Body of pancreas (tissue), 4 donors: ENCODE measurements at regions of chr15 and their contacts with region 1.

Region 1: DNA sequence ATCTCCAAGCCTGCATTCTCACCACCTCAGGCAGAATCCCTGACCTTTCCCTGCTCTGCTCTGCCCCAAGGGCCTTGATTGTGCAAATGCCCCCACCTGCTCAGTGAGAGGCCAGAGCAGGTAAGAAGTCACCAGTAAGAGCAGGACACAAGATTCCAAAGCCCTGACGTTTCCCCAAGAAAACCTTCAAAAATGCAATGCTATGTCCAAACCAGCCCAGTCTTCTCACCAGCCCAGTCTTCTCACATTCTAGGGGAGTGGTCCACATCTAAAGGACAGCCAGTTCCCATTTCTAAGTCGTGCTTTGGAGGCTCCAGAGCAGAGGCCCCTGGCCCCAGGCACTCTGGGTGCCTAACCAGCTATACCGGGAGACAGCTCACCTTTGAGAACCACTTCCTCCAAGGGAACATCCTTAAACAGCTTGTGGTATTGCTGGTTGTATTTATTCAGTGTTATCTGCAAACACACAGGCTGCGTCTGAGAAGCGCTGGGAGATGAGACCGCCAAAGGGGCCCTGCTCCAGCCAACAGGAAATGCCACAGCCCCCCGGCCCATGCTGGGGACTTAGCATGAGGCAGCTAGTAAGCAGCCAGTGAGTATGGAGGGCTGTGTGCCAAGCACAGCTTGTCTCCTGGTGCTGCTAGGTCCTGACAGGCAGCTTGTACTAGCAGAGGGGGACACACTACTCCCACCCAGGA is 29.3 kb downstream of the GRAMD2A start:
- DNase-seq: no peak
- ATAC-seq: no peak
- H3K4me3 ChIP-seq: no peak overlapping the region
- H3K27ac ChIP-seq: no peak overlapping the region
- H3K4me1 ChIP-seq: no peaks in the 10 kb centered on the region
- H3K27me3 ChIP-seq: no peaks in the 10 kb centered on the region
- CTCF ChIP-seq: no peak
- POLR2A ChIP-seq: no peak

Region 2: GRCh38 chr15:71743861-71744382 is 424.3 kb before region 1 on chr15:
- intact Hi-C with region 1: loop called (anchors 10 kb)
- DNase-seq: peak; percentile 71 to 76 (median 74)
- ATAC-seq: no peak
- H3K4me3 ChIP-seq: no peak overlapping the region
- H3K27ac ChIP-seq: no peak overlapping the region
- H3K4me1 ChIP-seq: peaks cover 11% of the 10 kb centered on the region
- H3K27me3 ChIP-seq: no peaks in the 10 kb centered on the region
- CTCF ChIP-seq: peak; percentile 52 to 85 (median 65)
- POLR2A ChIP-seq: no peak